B cell (primary cell): ENCODE measurements at regions of chr21 and their contacts with region 1.

Region 1: DNA sequence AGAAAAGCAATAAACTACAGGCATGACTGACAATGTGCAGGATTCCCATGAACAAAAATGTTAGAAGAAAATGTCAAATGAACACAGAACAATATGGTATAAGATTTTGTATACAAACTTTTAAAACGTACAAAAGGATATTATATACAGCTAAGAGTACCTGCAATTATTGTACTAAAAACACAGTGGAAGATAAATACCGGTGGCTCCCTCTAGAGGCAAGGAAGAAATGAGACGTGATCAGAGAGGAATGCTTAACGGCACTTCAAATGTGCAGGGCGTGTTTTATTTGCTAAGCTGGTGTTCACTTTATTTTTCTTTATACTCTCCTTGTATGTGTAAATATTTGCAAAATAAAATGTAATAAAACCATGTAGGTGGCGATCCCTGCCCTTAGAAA is 191.8 kb upstream of the SAMSN1 start:
- DNase-seq: peak; percentile 80
- ATAC-seq: peak; percentile 81
- H3K4me3 ChIP-seq: no peak overlapping the region
- H3K4me3 Mint-ChIP-seq: no peak overlapping the region
- H3K27ac ChIP-seq: no peak overlapping the region
- H3K27ac Mint-ChIP-seq: no peak overlapping the region
- H3K4me1 ChIP-seq: peaks cover 6 to 16% of the 10 kb centered on the region in 2 donors
- H3K4me1 Mint-ChIP-seq: peaks cover 28% of the 10 kb centered on the region
- H3K27me3 ChIP-seq: no peaks in the 10 kb centered on the region
- H3K27me3 Mint-ChIP-seq: no peaks in the 10 kb centered on the region
- CTCF ChIP-seq: peak; percentile 89

Region 2: DNA sequence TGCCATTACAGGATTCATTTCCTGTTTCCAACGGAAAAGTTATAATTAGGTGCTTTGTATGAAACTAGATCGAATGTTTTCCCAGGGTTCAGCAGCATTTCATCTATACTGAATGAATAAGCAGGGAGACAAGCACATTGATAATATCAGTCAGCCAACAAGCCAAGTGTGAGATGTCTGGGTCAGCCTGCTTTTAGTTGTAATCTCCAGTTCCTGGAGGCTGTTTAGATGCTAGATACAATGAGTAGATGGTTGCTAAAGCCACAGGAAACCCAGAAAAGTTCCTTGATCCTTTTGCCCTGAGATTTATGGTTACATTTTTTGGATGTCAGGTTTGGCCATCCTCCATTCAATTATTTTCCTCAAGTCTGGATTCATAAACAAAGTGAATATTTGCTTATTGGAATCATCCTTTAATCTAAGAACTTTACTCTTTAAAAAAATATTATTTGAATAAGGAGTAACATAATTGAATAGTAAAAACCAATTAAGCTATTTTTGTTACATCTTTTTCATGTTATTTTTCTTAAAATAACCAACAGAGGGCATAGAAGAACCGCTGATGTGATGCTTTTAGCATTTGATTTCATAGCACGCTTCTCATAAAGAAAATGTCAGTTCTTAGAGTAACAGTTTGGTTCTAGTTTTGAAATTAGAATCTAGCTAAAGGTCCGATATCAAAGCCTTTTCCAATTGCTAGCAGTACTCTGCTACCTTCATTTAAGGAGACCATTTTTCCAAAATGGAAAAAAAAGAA is 431.6 kb before region 1 on chr21:
- CTCF ChIA-PET with region 1: interaction called, 3 read pairs
- POLR2A ChIA-PET with region 1: no interaction called
- intact Hi-C with region 1: loop called (anchors 5 kb)
- DNase-seq: peak; percentile 3
- ATAC-seq: no peak
- H3K4me3 ChIP-seq: no peak overlapping the region
- H3K4me3 Mint-ChIP-seq: no peak overlapping the region
- H3K27ac ChIP-seq: no peak overlapping the region
- H3K27ac Mint-ChIP-seq: no peak overlapping the region
- H3K4me1 ChIP-seq: no peaks in the 10 kb centered on the region
- H3K4me1 Mint-ChIP-seq: no peaks in the 10 kb centered on the region
- H3K27me3 ChIP-seq: no peaks in the 10 kb centered on the region
- H3K27me3 Mint-ChIP-seq: peaks cover 10% of the 10 kb centered on the region
- CTCF ChIP-seq: peak; percentile 45

Region 3: GRCh38 chr21:14403681-14404318 is 334.1 kb before region 1 on chr21:
- CTCF ChIA-PET with region 1: interaction called, 26 read pairs
- POLR2A ChIA-PET with region 1: no interaction called
- intact Hi-C with region 1: loop called (anchors 1 kb)
- DNase-seq: peak; percentile 64
- ATAC-seq: peak; percentile 51
- H3K4me3 ChIP-seq: no peak overlapping the region
- H3K4me3 Mint-ChIP-seq: no peak overlapping the region
- H3K27ac ChIP-seq: no peak overlapping the region
- H3K27ac Mint-ChIP-seq: no peak overlapping the region
- H3K4me1 ChIP-seq: no peaks in the 10 kb centered on the region
- H3K4me1 Mint-ChIP-seq: peaks cover 1% of the 10 kb centered on the region
- H3K27me3 ChIP-seq: no peaks in the 10 kb centered on the region
- H3K27me3 Mint-ChIP-seq: no peaks in the 10 kb centered on the region
- CTCF ChIP-seq: peak; percentile 78

Region 4: DNA sequence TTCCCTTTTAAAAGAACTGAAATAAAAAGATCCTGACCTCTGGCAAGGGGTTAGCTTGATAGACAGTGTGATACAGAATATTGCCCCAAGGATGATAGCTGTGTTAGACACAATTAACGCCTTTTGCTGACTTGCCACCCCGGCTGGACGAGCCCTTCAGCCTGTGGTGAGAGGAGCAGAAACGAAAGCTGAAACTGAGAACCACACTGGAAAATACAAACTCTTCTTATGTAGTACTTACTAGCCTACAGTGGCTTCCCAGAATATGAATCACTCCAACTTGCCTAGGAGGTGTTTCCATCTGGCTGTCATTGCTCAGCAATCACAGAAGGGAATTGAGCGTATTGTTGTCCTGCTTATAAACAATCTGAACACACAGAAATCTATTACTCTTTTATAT is 214.7 kb before region 1 on chr21:
- CTCF ChIA-PET with region 1: interaction called, 18 read pairs
- POLR2A ChIA-PET with region 1: no interaction called
- intact Hi-C with region 1: loop called (anchors 5 kb)
- DNase-seq: peak; percentile 58
- ATAC-seq: peak; percentile 67
- H3K4me3 ChIP-seq: peak overlapping the region in 3 of 5 experiments; percentile 25 to 42 (median 29)
- H3K4me3 Mint-ChIP-seq: peak overlapping the region; percentile 83
- H3K27ac ChIP-seq: peak overlapping the region; percentile 12 to 69
- H3K27ac Mint-ChIP-seq: peak overlapping the region; percentile 87
- H3K4me1 ChIP-seq: peaks cover 28 to 33% of the 10 kb centered on the region in 2 donors
- H3K4me1 Mint-ChIP-seq: peaks cover 53% of the 10 kb centered on the region
- H3K27me3 ChIP-seq: no peaks in the 10 kb centered on the region
- H3K27me3 Mint-ChIP-seq: no peaks in the 10 kb centered on the region
- CTCF ChIP-seq: no peak

Region 5: DNA sequence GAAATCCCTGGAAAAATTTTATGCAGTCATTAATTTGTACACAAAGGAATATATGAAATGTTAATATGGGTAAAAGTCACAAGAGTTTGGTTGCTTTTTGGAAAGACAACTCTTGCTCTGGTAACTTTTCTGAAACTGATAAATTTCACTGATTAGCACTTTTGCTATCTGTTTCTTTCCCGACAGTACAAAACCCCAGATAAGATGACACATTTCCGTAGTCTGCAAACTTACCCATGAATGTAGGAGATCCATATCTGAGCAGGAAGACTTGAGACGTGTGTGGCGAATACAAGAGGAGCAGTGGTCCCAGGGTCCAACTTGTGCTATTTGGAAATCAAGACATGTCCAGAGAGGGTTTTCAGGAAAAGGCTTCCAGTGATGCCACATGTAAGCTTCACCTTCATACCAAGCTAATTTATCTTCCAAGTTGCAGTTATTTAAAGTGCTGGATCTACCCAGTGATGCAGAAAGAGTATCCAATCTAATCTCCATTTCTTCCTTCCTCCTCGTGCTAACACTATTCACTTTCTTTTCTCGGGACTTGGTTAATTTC is 155.9 kb before region 1 on chr21:
- CTCF ChIA-PET with region 1: no interaction called
- POLR2A ChIA-PET with region 1: no interaction called
- intact Hi-C with region 1: no loop called
- DNase-seq: no peak
- ATAC-seq: no peak
- H3K4me3 ChIP-seq: no peak overlapping the region
- H3K4me3 Mint-ChIP-seq: no peak overlapping the region
- H3K27ac ChIP-seq: no peak overlapping the region
- H3K27ac Mint-ChIP-seq: no peak overlapping the region
- H3K4me1 ChIP-seq: no peaks in the 10 kb centered on the region
- H3K4me1 Mint-ChIP-seq: no peaks in the 10 kb centered on the region
- H3K27me3 ChIP-seq: no peaks in the 10 kb centered on the region
- H3K27me3 Mint-ChIP-seq: no peaks in the 10 kb centered on the region
- CTCF ChIP-seq: no peak

Region 6: GRCh38 chr21:14686466-14687267 is 51.3 kb before region 1 on chr21:
- CTCF ChIA-PET with region 1: interaction called, 21 read pairs
- POLR2A ChIA-PET with region 1: no interaction called
- intact Hi-C with region 1: no loop called
- DNase-seq: peak; percentile 52
- ATAC-seq: peak; percentile 32
- H3K4me3 ChIP-seq: peak overlapping the region in 3 of 5 experiments; percentile 5 to 18 (median 6)
- H3K4me3 Mint-ChIP-seq: peak overlapping the region; percentile 78
- H3K27ac ChIP-seq: peak overlapping the region; percentile 64 to 80
- H3K27ac Mint-ChIP-seq: peak overlapping the region; percentile 88
- H3K4me1 ChIP-seq: peaks cover 57% of the 10 kb centered on the region in 2 donors
- H3K4me1 Mint-ChIP-seq: peaks cover 56% of the 10 kb centered on the region
- H3K27me3 ChIP-seq: no peaks in the 10 kb centered on the region
- H3K27me3 Mint-ChIP-seq: no peaks in the 10 kb centered on the region
- CTCF ChIP-seq: no peak

Region 7: GRCh38 chr21:14773777-14774345 is 35.9 kb after region 1 on chr21:
- CTCF ChIA-PET with region 1: interaction called, 24 read pairs
- POLR2A ChIA-PET with region 1: no interaction called
- intact Hi-C with region 1: loop called (anchors 1 kb)
- DNase-seq: peak; percentile 66
- ATAC-seq: peak; percentile 64
- H3K4me3 ChIP-seq: no peak overlapping the region
- H3K4me3 Mint-ChIP-seq: no peak overlapping the region
- H3K27ac ChIP-seq: no peak overlapping the region
- H3K27ac Mint-ChIP-seq: no peak overlapping the region
- H3K4me1 ChIP-seq: peaks cover 0 to 3% of the 10 kb centered on the region in 2 donors
- H3K4me1 Mint-ChIP-seq: peaks cover 17% of the 10 kb centered on the region
- H3K27me3 ChIP-seq: no peaks in the 10 kb centered on the region
- H3K27me3 Mint-ChIP-seq: no peaks in the 10 kb centered on the region
- CTCF ChIP-seq: peak; percentile 78

Region 8: DNA sequence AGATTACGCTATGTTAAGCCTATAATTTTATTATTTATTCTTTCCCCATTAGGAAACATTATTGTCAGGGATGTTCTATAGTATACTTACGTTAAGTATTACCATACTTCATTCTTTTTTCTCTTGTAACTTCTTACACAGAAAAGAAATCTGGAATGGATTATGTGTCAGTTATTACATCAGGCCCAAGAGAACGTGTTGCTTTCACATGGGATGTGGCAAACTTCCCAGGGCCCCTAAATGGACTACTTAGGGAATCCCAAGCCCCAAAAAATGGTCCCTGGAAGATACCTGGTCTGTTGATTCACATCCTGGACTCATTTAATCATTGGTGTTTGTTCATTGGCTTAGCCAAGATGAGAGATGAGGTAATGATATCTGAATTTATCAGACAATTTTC is 77.1 kb after region 1 on chr21:
- CTCF ChIA-PET with region 1: no interaction called
- POLR2A ChIA-PET with region 1: no interaction called
- intact Hi-C with region 1: no loop called
- DNase-seq: no peak
- ATAC-seq: no peak
- H3K4me3 ChIP-seq: no peak overlapping the region
- H3K4me3 Mint-ChIP-seq: no peak overlapping the region
- H3K27ac ChIP-seq: no peak overlapping the region
- H3K27ac Mint-ChIP-seq: no peak overlapping the region
- H3K4me1 ChIP-seq: peaks cover 4 to 9% of the 10 kb centered on the region in 2 donors
- H3K4me1 Mint-ChIP-seq: peaks cover 21% of the 10 kb centered on the region
- H3K27me3 ChIP-seq: no peaks in the 10 kb centered on the region
- H3K27me3 Mint-ChIP-seq: no peaks in the 10 kb centered on the region
- CTCF ChIP-seq: no peak